ENCODE measurements at regions of chr6 and their contacts with region 1.

Region 1: GRCh38 chr6:151323791-151324487 is 67.4 kb downstream of the ZBTB2 start:
- DNase-seq: peak; percentile 78
- ATAC-seq: peak; percentile 91
- H3K4me3 Mint-ChIP-seq: no peak overlapping the region
- H3K27ac Mint-ChIP-seq: no peak overlapping the region
- H3K4me1 Mint-ChIP-seq: peaks cover 18% of the 10 kb centered on the region
- H3K27me3 Mint-ChIP-seq: peaks cover 35% of the 10 kb centered on the region
- CTCF ChIP-seq: peak; percentile 98

Region 2: DNA sequence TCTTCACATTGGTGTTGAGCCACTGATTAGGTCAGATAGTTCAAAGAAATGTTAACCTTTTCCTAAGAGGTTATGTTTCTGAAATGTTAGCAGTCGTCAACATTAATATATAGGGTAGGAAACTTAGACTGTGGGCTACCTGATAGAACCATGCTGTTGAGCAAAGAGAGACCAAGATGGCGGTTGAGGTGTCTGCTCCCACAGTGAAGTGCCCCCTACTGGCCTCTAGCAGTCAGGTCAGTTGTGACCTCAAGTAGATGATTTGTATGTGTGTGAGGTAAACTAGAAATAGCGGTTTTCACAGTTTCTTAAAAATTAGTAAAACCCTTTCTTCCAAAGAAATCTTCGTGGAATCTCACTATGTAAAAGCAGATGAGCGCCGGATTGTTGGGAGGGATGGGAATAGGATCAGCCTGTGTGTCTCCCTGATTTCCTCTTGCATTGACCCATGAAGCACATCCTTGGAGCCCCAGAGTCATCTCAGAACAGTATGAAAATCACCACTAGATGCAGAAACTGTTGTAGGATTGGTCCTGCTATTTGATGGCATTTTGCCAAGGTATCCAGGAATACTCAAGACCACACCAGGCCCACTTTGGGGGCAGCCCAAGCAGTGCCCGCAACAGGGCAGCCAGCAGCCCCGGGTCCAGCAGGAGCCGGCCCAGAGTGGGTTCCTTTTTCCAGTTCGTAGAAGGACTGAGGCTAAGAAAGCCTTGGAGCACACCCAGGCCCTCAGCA is 418.0 kb before region 1 on chr6:
- CTCF ChIA-PET with region 1: interaction called, 12 read pairs
- POLR2A ChIA-PET with region 1: no interaction called
- intact Hi-C with region 1: no loop called
- DNase-seq: peak; percentile 4
- ATAC-seq: no peak
- H3K4me3 Mint-ChIP-seq: no peak overlapping the region
- H3K27ac Mint-ChIP-seq: no peak overlapping the region
- H3K4me1 Mint-ChIP-seq: no peaks in the 10 kb centered on the region
- H3K27me3 Mint-ChIP-seq: no peaks in the 10 kb centered on the region
- CTCF ChIP-seq: no peak

Region 3: GRCh38 chr6:151021896-151022295 is 302.0 kb before region 1 on chr6:
- CTCF ChIA-PET with region 1: interaction called, 179 read pairs
- POLR2A ChIA-PET with region 1: interaction called, 3 read pairs
- intact Hi-C with region 1: no loop called
- DNase-seq: no peak
- ATAC-seq: no peak
- H3K4me3 Mint-ChIP-seq: no peak overlapping the region
- H3K27ac Mint-ChIP-seq: no peak overlapping the region
- H3K4me1 Mint-ChIP-seq: no peaks in the 10 kb centered on the region
- H3K27me3 Mint-ChIP-seq: no peaks in the 10 kb centered on the region
- CTCF ChIP-seq: no peak

Region 4: GRCh38 chr6:151257985-151258445 is 65.9 kb before region 1 on chr6:
- CTCF ChIA-PET with region 1: interaction called, 12 read pairs
- POLR2A ChIA-PET with region 1: no interaction called
- intact Hi-C with region 1: no loop called
- DNase-seq: no peak
- ATAC-seq: no peak
- H3K4me3 Mint-ChIP-seq: no peak overlapping the region
- H3K27ac Mint-ChIP-seq: no peak overlapping the region
- H3K4me1 Mint-ChIP-seq: no peaks in the 10 kb centered on the region
- H3K27me3 Mint-ChIP-seq: peaks cover 5% of the 10 kb centered on the region
- CTCF ChIP-seq: no peak

Region 5: DNA sequence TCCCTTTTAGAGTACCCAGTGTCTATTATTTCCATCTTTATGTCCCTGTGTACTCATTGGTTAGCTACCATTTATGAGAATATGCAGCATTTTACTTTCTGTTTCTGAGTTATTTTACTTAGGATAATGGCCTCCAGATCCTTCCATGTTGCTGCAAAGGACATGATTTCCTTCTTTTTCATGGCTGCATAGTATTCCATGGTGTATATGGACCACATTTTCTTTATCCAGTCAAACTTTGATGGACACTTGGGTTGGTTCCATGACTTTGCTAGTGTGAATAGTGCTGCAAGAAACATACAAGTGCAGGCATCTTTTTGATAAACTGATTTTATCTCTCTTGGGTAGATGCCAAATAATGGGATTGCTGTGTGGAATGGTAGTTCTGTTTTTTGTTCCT is 12.0 kb after region 1 on chr6:
- CTCF ChIA-PET with region 1: interaction called, 65 read pairs
- POLR2A ChIA-PET with region 1: no interaction called
- intact Hi-C with region 1: no loop called
- DNase-seq: no peak
- ATAC-seq: no peak
- H3K4me3 Mint-ChIP-seq: no peak overlapping the region
- H3K27ac Mint-ChIP-seq: no peak overlapping the region
- H3K4me1 Mint-ChIP-seq: no peaks in the 10 kb centered on the region
- H3K27me3 Mint-ChIP-seq: peaks cover 2% of the 10 kb centered on the region
- CTCF ChIP-seq: no peak

Region 6: GRCh38 chr6:151413372-151414145 is 89.6 kb after region 1 on chr6:
- CTCF ChIA-PET with region 1: no interaction called
- POLR2A ChIA-PET with region 1: no interaction called
- intact Hi-C with region 1: no loop called
- DNase-seq: peak; percentile 67
- ATAC-seq: peak; percentile 93
- H3K4me3 Mint-ChIP-seq: no peak overlapping the region
- H3K27ac Mint-ChIP-seq: no peak overlapping the region
- H3K4me1 Mint-ChIP-seq: peaks cover 18% of the 10 kb centered on the region
- H3K27me3 Mint-ChIP-seq: no peaks in the 10 kb centered on the region
- CTCF ChIP-seq: no peak

Region 7: DNA sequence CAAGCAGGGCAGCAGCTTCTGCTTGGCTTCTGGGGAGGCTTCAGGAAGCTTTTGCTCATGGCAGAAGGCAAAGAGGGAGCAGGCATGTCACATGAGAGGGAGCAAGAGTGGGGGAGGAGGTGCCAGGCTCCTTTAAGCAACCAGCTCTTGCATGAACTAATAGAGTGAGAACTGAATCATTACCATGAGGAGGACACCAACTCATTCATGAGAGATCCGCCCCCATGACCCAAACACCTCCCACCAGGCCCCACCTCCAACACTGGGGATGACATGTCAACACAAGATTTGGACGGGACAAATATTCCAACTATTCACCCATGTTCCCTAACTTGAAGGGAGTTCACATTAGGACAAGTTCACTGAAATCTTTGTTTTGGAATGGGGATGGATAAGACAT is 328.4 kb after region 1 on chr6:
- CTCF ChIA-PET with region 1: no interaction called
- POLR2A ChIA-PET with region 1: no interaction called
- intact Hi-C with region 1: no loop called
- DNase-seq: no peak
- ATAC-seq: no peak
- H3K4me3 Mint-ChIP-seq: no peak overlapping the region
- H3K27ac Mint-ChIP-seq: no peak overlapping the region
- H3K4me1 Mint-ChIP-seq: no peaks in the 10 kb centered on the region
- H3K27me3 Mint-ChIP-seq: peaks cover 6% of the 10 kb centered on the region
- CTCF ChIP-seq: no peak

Measured in activated CD8-positive, alpha-beta T cell treated with anti-CD3 and anti-CD28 coated beads for 36 hours (primary cell).